Activated T-helper 2 cell treated with anti-CD3 and anti-CD28 coated beads, Interferon-gamma antibody, Interleukin-2, Interleukin-4, amounts not matched to agents 10 μg/mL and 5 μg/mL and 100 μg/mL, durations not matched to agents 14 hours and 24 hours and 36 hours (primary cell): ENCODE measurements at regions of chr14 and their contacts with region 1.

Region 1: GRCh38 chr14:65222440-65222858 is 120.1 kb upstream of the MAX start:
- DNase-seq: peak; percentile 35
- H3K4me3 Mint-ChIP-seq: no peak overlapping the region
- H3K27ac Mint-ChIP-seq: peak overlapping the region; percentile 24
- H3K4me1 Mint-ChIP-seq: peaks cover 34% of the 10 kb centered on the region
- H3K27me3 Mint-ChIP-seq: no peaks in the 10 kb centered on the region

Region 2: GRCh38 chr14:65361920-65362319 is 139.5 kb after region 1 on chr14:
- intact Hi-C with region 1: loop called (anchors 10 kb)
- DNase-seq: no peak
- H3K4me3 Mint-ChIP-seq: no peak overlapping the region
- H3K27ac Mint-ChIP-seq: no peak overlapping the region
- H3K4me1 Mint-ChIP-seq: peaks cover 34% of the 10 kb centered on the region
- H3K27me3 Mint-ChIP-seq: no peaks in the 10 kb centered on the region

Region 3: DNA sequence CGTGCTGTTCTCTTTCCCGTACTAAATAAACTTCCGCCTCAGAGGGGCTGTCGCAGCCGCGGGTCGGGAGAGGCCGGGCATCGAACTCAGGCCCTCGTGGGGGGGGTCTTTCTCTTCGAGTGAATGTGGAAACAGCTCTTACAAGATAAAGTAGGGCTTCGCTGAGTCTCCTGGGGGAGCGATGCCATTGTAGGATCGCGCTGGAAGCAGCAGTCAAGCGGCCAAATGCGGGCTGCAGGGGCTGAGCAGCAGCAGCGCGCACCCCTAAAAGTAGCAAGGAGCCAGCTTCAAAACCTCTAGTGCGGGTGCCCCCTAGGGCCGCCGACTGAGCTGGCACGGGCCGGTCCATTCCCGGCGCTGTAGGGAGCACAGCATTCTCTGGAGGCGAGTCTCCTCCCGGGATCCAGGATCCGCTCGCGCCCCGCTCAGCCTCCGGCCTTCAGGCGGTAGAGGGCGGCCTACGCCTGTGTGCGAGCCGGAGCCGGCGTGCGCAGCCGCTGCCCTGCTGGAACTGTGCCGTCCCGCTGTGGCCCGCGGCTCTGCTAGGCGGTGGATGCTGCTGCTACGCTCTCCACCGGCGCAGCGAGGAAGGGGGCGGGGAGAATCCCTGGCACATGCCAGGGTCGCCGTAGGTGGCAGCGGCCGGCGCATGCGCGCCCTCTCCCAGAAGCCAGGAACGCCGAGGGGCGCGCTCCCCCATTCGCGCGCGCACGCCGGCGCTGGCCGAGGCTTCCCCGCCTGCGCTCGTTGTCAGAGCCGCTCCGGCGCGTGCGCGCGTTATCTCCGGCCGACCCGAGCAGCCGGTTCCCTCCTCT is 189.8 kb after region 1 on chr14 and contains the start of gene FUT8:
- intact Hi-C with region 1: no loop called
- DNase-seq: peak; percentile 90
- H3K4me3 Mint-ChIP-seq: peak within 1 kb of the TSS; percentile 95
- H3K27ac Mint-ChIP-seq: peak within 1 kb of the TSS; percentile 95
- H3K4me1 Mint-ChIP-seq: peaks cover 37% of the 10 kb centered on the region
- H3K27me3 Mint-ChIP-seq: no peaks in the 10 kb centered on the region
- total RNA-seq, gene FUT8: 110 and 124 TPM in 2 replicates

Region 4: DNA sequence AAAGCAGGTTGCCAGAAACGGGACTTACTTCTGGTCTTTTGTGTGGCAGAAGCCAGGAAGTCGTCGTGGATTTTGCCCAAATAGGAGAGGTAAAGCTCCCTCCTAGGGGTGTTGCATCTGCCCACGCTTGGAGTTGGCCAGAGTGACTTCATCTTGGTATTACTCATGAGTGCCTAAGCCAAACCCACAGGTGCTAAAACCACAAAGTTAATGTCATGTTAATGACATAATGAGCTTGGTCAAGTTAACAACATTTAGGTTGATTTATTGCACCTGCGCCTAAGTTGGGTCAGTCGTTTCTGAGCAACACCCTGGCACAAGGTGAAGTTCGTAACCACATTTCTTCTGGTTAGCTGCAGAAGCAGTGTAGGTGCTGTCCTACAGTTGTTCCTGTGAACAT is 415.3 kb after region 1 on chr14:
- intact Hi-C with region 1: loop called (anchors 5 kb)
- DNase-seq: peak; percentile 13
- H3K4me3 Mint-ChIP-seq: peak overlapping the region; percentile 5
- H3K27ac Mint-ChIP-seq: peak overlapping the region; percentile 31
- H3K4me1 Mint-ChIP-seq: peaks cover 35% of the 10 kb centered on the region
- H3K27me3 Mint-ChIP-seq: no peaks in the 10 kb centered on the region

Region 5: GRCh38 chr14:65824285-65824977 is 602.0 kb after region 1 on chr14:
- intact Hi-C with region 1: loop called (anchors 1 kb)
- DNase-seq: peak; percentile 52
- H3K4me3 Mint-ChIP-seq: no peak overlapping the region
- H3K27ac Mint-ChIP-seq: no peak overlapping the region
- H3K4me1 Mint-ChIP-seq: peaks cover 19% of the 10 kb centered on the region
- H3K27me3 Mint-ChIP-seq: peaks cover 12% of the 10 kb centered on the region